PC-9 (cell line): ENCODE measurements at regions of chr9 and their contacts with region 1.

Region 1: DNA sequence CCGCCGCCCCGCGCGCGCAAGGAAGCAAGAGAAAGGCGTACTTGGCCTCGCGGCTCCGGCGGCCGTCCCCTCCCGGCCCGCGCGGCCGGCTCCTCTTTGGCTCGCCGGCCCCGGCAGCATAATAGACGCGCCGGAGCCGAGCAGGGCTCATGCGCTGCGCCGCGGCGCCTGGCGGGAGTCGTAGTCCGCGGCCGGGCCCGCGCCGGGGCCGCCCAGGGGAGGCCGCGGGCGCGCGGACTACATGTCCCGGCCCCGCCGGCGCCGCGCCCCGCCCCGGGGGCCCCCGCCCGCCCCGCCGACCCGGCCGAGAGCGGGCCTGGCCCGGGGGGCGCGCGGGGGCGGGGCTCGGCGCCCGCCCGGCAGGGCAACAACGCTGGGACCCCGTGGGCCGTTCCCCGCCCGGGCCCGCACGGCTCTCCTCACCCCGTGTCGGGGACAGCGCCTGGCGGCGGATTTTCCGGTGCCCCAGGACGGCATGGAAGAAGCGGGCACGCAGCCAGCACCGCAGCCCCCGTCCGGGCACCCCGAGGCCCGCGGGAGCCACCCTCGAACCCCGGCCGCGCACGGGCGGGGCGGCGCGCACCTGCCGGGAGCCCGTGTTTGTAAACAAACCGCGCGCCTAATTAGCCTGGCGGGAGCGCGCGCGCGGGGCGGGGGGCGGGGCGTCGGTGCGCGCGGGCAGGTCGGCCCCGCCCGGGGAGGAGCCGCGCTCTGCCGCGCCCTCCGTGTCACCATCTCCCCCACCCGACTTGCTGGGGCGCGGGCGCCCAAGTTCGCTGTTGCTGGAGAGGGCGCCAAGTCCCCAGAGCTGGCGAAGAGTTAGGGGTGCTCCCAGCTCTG is at the start of gene BRD3:
- DNase-seq: peak; percentile 57 to 90
- H3K4me3 ChIP-seq: peak within 1 kb of the TSS; percentile 68
- H3K27ac ChIP-seq: no peak within 1 kb of the TSS
- H3K4me1 ChIP-seq: peaks cover 13% of the 10 kb centered on the region
- H3K27me3 ChIP-seq: peaks cover 42% of the 10 kb centered on the region
- CTCF ChIP-seq: no peak
- total RNA-seq, gene BRD3: 47.3 and 64.0 TPM in 2 replicates

Region 2: DNA sequence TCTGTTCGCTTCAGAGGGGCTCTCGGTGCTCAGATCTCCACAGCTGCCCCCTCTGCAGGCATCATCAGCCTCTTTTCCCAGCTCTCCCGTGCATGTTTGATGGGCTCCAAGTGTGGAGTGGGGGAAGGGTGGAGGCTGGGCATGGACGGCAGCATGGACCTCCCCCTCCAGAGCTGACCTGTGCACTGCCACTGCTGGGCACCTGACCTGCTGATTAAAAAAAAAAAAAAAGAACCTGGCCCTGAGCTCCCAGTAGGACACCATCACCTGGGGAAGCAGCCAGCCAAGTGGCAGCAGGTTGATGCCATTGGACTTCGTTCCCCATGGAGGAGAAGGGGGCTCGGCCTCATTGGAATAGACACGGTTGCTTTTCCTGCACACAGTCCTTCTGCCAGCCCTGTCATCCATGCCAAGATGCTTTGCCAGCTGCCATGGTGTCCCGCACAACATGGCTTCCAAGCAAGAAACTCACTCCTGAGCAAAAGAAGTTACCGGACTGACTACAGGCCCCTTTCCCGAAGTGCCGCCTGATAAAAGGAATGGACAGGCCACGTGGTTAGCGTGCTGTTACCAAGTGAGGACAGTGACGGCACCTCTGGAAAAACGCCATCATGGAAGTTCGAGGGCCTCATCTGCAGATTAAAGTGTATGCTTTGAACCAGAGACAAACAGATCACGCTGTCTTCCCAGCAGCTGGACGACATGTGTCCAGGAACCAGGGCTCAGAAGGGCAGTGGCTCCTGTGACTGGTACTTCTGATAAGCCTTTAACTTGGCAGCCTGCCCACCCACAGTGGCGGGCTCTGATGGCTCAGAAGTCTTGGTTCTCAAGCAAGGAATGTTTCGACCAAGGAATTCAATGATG is 57.6 kb before region 1 on chr9:
- CTCF ChIA-PET with region 1: no interaction called
- POLR2A ChIA-PET with region 1: no interaction called
- intact Hi-C with region 1: no loop called
- DNase-seq: peak in 1 of 2 experiments; percentile 33
- H3K4me3 ChIP-seq: no peak overlapping the region
- H3K27ac ChIP-seq: no peak overlapping the region
- H3K4me1 ChIP-seq: peaks cover 10% of the 10 kb centered on the region
- H3K27me3 ChIP-seq: peaks cover 3% of the 10 kb centered on the region; the same call in 1 of the 2 replicates
- CTCF ChIP-seq: no peak

Region 3: DNA sequence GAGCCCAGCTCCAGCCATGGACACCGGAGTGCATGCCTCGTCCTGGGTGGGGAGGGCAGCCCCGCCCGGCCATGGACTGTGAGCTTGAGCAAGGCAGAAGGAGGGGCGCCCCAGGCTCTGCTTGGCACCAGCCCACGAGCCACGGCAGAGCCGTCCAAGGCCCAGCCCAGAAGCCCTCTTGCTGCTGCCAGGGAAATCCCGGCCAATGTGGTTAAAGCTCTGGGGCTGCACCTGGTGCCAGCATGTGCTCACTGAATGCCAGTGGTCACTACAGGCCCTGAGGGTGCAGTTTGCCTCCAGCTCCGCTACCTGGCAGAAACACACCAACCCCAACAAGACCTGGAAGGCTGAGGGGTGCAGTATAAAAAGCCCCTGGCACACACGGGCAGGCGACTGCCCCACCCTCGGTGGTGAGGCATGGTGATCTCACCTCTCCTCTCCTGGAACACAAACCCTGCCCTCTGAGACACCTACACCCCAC is 12.1 kb before region 1 on chr9:
- CTCF ChIA-PET with region 1: interaction called, 3 read pairs
- POLR2A ChIA-PET with region 1: interaction called, 26 read pairs
- intact Hi-C with region 1: loop called (anchors 1 kb)
- DNase-seq: peak; percentile 75 to 94
- H3K4me3 ChIP-seq: no peak overlapping the region
- H3K27ac ChIP-seq: no peak overlapping the region
- H3K4me1 ChIP-seq: peaks cover 18% of the 10 kb centered on the region
- H3K27me3 ChIP-seq: no peaks in the 10 kb centered on the region
- CTCF ChIP-seq: no peak

Region 4: GRCh38 chr9:134135343-134136118 is 67.4 kb after region 1 on chr9 and contains the start of gene WDR5:
- CTCF ChIA-PET with region 1: no interaction called
- POLR2A ChIA-PET with region 1: no interaction called
- intact Hi-C with region 1: loop called (anchors 2 kb)
- DNase-seq: peak; percentile 60 to 91
- H3K4me3 ChIP-seq: peak within 1 kb of the TSS; percentile 96
- H3K27ac ChIP-seq: peak within 1 kb of the TSS; percentile 41; the same call in 1 of the 2 replicates
- H3K4me1 ChIP-seq: peaks cover 31% of the 10 kb centered on the region
- H3K27me3 ChIP-seq: no peaks in the 10 kb centered on the region
- CTCF ChIP-seq: peak; percentile 29; the same call in 1 of the 2 replicates
- total RNA-seq, gene WDR5: 53.4 and 54.9 TPM in 2 replicates